ENCODE measurements at regions of chr11 and their contacts with region 1.

Region 1: DNA sequence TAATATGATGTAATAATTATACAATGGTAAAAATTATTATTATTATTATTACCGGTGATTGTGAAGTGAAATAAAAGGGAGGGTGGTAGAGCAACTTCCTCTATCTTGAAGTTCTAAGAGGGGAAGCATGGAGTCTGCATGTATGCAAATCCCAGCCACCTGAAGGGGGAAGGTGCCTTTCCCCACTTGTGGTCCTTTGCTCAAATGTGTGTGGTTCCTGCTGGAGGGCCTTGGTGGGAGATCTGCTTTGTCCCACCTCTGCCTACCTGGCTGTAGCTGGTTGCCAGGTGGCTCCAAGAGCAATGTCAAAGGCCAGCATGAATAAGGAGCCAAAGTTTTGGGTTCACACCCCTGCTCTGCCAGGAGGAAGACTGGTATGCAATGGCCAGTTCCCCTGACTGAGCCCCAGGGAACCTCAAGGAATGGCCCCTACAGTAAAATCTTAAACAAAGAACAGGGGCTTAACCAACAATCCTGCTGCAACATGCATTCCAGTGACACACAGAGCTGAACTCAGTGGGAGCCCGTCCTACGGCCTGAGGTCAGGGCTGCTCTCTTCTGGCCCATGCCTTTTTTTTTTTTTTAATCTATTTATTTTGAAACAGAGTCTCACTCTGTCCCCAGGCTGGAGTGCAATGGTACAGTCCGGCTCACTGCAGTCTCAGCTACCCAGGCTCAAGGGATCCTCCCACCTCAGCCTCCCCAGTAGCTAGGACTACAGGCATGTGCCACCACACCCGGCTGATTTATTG is 8.5 kb downstream of the TMEM132A start:
- DNase-seq: peak; percentile 80
- ATAC-seq: peak; percentile 52
- H3K4me3 ChIP-seq: peak overlapping the region in 1 of 5 experiments; percentile 56
- H3K4me3 Mint-ChIP-seq: peak overlapping the region; percentile 74
- H3K27ac ChIP-seq: peak overlapping the region; percentile 72 to 90
- H3K27ac Mint-ChIP-seq: peak overlapping the region; percentile 91
- H3K4me1 ChIP-seq: peaks cover 26 to 44% of the 10 kb centered on the region in 2 donors
- H3K4me1 Mint-ChIP-seq: peaks cover 46% of the 10 kb centered on the region
- H3K27me3 ChIP-seq: no peaks in the 10 kb centered on the region
- H3K27me3 Mint-ChIP-seq: no peaks in the 10 kb centered on the region
- CTCF ChIP-seq: no peak

Region 2: DNA sequence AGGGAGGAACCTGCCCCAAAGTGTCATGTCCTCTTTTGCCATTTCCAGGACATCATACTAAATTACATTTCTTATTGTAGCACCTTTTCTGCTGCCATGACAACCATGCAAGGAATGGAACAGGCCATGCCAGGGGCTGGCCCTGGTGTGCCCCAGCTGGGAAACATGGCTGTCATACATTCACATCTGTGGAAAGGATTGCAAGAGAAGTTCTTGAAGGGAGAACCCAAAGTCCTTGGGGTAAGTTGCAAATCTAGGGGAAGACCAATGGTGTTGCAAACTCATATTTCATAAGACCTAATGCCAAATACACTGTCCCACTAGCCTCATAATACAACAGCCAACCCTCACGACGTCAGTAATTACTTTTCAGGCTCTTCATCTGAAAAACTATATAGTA is 640.6 kb before region 1 on chr11:
- CTCF ChIA-PET with region 1: no interaction called
- POLR2A ChIA-PET with region 1: no interaction called
- intact Hi-C with region 1: no loop called
- DNase-seq: no peak
- ATAC-seq: no peak
- H3K4me3 ChIP-seq: no peak overlapping the region
- H3K4me3 Mint-ChIP-seq: no peak overlapping the region
- H3K27ac ChIP-seq: no peak overlapping the region
- H3K27ac Mint-ChIP-seq: no peak overlapping the region
- H3K4me1 ChIP-seq: no peaks in the 10 kb centered on the region
- H3K4me1 Mint-ChIP-seq: no peaks in the 10 kb centered on the region
- H3K27me3 ChIP-seq: no peaks in the 10 kb centered on the region
- H3K27me3 Mint-ChIP-seq: peaks cover 3% of the 10 kb centered on the region
- CTCF ChIP-seq: no peak

Region 3: DNA sequence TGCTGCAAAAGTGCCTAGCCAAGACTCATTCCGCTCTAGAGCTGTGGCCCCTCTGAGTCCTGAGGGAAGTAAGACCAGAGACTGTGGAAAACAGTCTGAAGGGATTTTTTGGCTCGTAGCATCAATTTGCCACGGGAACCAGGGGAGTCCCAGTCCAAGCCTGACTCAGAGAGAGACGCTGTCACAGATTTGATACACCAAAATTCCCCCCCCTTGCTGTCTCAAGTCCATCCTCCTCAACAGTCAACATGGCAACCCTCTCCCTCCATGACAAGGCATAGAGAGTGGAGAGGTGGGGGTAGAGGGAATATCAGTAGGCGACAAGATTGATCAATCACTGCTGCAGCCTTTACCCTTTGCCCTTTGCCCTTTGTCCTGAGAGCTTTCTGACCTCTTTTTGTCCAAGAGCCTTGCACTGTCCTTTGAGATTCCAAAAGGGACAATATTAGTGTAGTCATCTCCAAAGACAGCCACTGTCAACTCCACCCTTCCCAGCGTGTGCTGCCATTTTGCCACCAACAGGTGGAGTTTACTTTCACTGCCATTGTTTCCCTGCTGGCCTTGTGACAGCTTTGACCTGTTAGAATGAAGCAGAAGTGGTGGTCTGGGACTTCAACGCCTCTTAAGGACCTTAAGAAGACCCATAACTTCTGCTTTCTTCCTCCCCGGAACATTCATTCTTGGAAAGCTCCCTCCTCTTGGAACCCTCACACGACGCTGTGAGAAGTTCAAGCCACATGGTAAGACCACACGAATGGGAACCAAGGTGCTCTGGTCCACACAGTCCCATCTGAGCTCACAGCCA is 11.9 kb after region 1 on chr11:
- CTCF ChIA-PET with region 1: interaction called, 10 read pairs
- POLR2A ChIA-PET with region 1: interaction called, 4 read pairs
- intact Hi-C with region 1: no loop called
- DNase-seq: peak; percentile 42
- ATAC-seq: peak; percentile 17
- H3K4me3 ChIP-seq: no peak overlapping the region
- H3K4me3 Mint-ChIP-seq: no peak overlapping the region
- H3K27ac ChIP-seq: no peak overlapping the region
- H3K27ac Mint-ChIP-seq: peak overlapping the region; percentile 47
- H3K4me1 ChIP-seq: peaks cover 30 to 40% of the 10 kb centered on the region in 2 donors
- H3K4me1 Mint-ChIP-seq: peaks cover 67% of the 10 kb centered on the region
- H3K27me3 ChIP-seq: no peaks in the 10 kb centered on the region
- H3K27me3 Mint-ChIP-seq: no peaks in the 10 kb centered on the region
- CTCF ChIP-seq: no peak

Region 4: GRCh38 chr11:61152816-61153592 is 220.2 kb after region 1 on chr11:
- CTCF ChIA-PET with region 1: no interaction called
- POLR2A ChIA-PET with region 1: no interaction called
- intact Hi-C with region 1: no loop called
- DNase-seq: no peak
- ATAC-seq: no peak
- H3K4me3 ChIP-seq: no peak overlapping the region
- H3K4me3 Mint-ChIP-seq: no peak overlapping the region
- H3K27ac ChIP-seq: no peak overlapping the region
- H3K27ac Mint-ChIP-seq: no peak overlapping the region
- H3K4me1 ChIP-seq: peaks cover 0 to 3% of the 10 kb centered on the region in 2 donors
- H3K4me1 Mint-ChIP-seq: peaks cover 10% of the 10 kb centered on the region
- H3K27me3 ChIP-seq: no peaks in the 10 kb centered on the region
- H3K27me3 Mint-ChIP-seq: no peaks in the 10 kb centered on the region
- CTCF ChIP-seq: no peak

Measured in B cell (primary cell).